ENCODE measurements at regions of chr12 and their contacts with region 1.

Region 1: GRCh38 chr12:104303538-104304151 is at the start of gene EID3:
- DNase-seq: peak; percentile 79 to 93 (median 90)
- ATAC-seq: peak; percentile 94 to 95
- H3K4me3 Mint-ChIP-seq: peak within 1 kb of the TSS; percentile 88 to 98 (median 96)
- H3K27ac Mint-ChIP-seq: peak within 1 kb of the TSS; percentile 91 to 99 (median 98)
- H3K4me1 Mint-ChIP-seq: peaks cover 26 to 63% (median 55%) of the 10 kb centered on the region in 4 donors
- H3K27me3 Mint-ChIP-seq: no peaks in the 10 kb centered on the region
- polyA plus RNA-seq, gene EID3: 10.1 to 13.5 (median 10.8) TPM

Region 2: GRCh38 chr12:104286538-104287482 is 16.8 kb before region 1 on chr12:
- POLR2A ChIA-PET with region 1: interaction called, 56 read pairs
- DNase-seq: peak; percentile 72 to 93 (median 86)
- ATAC-seq: peak; percentile 86 to 88
- H3K4me3 Mint-ChIP-seq: peak overlapping the region; percentile 94 to 99 (median 98)
- H3K27ac Mint-ChIP-seq: peak overlapping the region; percentile 87 to 96 (median 95)
- H3K4me1 Mint-ChIP-seq: peaks cover 17 to 40% (median 32%) of the 10 kb centered on the region in 4 donors
- H3K27me3 Mint-ChIP-seq: peaks cover 0 to 3% (median 0%) of the 10 kb centered on the region in 5 donors

Measured in naive thymus-derived CD8-positive, alpha-beta T cell (primary cell).